Naive thymus-derived CD4-positive, alpha-beta T cell (primary cell): ENCODE measurements at regions of chr1 and their contacts with region 1.

Region 1: DNA sequence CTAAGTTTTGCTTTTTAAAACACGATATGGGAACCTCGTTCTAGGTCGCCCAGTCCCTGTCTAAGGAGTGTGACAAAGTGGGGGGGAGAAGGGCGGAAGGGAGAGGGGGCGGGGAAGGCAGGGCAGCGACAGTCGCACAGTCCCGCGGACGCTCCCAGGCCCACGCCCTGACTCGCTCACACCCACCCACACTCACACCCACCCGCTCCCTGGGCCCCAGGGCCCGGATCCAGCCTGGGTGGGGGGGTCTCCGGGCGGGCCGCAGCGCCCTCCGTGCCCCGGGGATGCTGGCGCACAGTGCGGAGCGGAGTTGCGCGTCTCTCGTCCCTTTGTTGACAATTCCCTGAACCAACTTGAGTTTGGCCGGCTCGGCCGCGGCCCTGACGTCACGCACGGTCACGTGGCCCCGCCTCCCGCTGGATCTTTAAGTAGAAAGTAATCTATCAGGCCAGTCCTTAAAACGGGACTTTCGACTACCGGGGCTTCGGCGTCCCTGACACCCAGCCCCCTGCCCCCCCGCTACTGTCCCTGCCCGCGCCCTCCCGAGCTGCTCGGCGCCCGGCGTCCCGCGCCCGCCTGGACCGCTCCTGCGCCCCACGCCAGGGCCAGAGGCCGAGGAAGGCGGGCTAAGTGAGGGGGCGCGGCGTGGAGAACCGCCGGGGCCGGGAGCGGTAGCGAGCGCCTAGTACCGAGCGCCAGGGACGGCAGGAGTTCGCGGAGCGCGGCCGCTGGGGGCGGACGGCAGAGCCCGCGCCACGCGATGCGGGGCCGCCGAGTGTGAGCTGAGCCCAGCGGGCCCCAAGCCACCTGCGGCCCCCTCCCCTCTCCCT is at the start of gene FOXD3:
- DNase-seq: peak in 5 of 9 donors; percentile 5 to 48 (median 26)
- ATAC-seq: peak; percentile 43
- H3K4me3 ChIP-seq: peak within 1 kb of the TSS; percentile 40
- H3K4me3 Mint-ChIP-seq: peak within 1 kb of the TSS; percentile 76 to 89 (median 84)
- H3K27ac ChIP-seq: no peak within 1 kb of the TSS
- H3K27ac Mint-ChIP-seq: peak within 1 kb of the TSS in 8 of 9 donors; percentile 67 to 88 (median 78)
- H3K4me1 ChIP-seq: peaks cover 2 to 13% of the 10 kb centered on the region in 2 donors
- H3K4me1 Mint-ChIP-seq: peaks cover 7 to 74% (median 50%) of the 10 kb centered on the region in 7 donors
- H3K27me3 ChIP-seq: peaks cover 42 to 77% of the 10 kb centered on the region in 2 donors
- H3K27me3 Mint-ChIP-seq: peaks cover 63 to 84% (median 78%) of the 10 kb centered on the region in 5 donors
- total RNA-seq, gene FOXD3: not detected

Region 2: DNA sequence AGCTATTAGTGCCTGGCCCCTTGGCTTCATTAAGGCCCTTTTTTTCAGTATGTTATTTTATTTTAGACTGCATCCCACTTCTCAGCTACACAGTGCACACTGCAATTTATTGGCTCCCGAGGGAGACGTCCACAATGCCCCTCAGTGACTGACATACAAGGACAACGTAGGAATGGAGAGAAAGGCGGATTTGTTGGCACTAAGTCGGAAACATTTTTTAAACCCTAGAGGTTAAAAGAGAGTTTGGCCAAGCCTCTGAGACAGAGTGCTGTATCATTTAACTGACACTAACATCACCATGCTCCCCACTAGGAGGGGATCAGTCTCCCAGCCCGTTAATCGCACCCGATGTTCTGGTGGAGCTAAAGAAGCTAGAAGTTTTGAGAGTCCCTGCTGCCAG is 45.7 kb before region 1 on chr1:
- CTCF ChIA-PET with region 1: no interaction called
- POLR2A ChIA-PET with region 1: no interaction called
- intact Hi-C with region 1: no loop called
- DNase-seq: no peak
- ATAC-seq: no peak
- H3K4me3 ChIP-seq: no peak overlapping the region
- H3K4me3 Mint-ChIP-seq: no peak overlapping the region
- H3K27ac ChIP-seq: no peak overlapping the region
- H3K27ac Mint-ChIP-seq: no peak overlapping the region
- H3K4me1 ChIP-seq: no peaks in the 10 kb centered on the region
- H3K4me1 Mint-ChIP-seq: no peaks in the 10 kb centered on the region
- H3K27me3 ChIP-seq: peaks cover 0 to 3% of the 10 kb centered on the region in 2 donors
- H3K27me3 Mint-ChIP-seq: peaks cover 3 to 19% (median 12%) of the 10 kb centered on the region in 5 donors

Region 3: GRCh38 chr1:63367215-63368103 is 45.1 kb after region 1 on chr1 and contains the start of gene ALG6:
- CTCF ChIA-PET with region 1: no interaction called
- POLR2A ChIA-PET with region 1: interaction called, 4 read pairs
- intact Hi-C with region 1: loop called in 1 of 2 experiments (anchors 2 kb)
- DNase-seq: peak; percentile 66 to 98 (median 84)
- ATAC-seq: peak; percentile 99
- H3K4me3 ChIP-seq: peak within 1 kb of the TSS; percentile 95
- H3K4me3 Mint-ChIP-seq: peak within 1 kb of the TSS; percentile 91 to 99 (median 94)
- H3K27ac ChIP-seq: peak within 1 kb of the TSS; percentile 72
- H3K27ac Mint-ChIP-seq: peak within 1 kb of the TSS; percentile 79 to 93 (median 84)
- H3K4me1 ChIP-seq: peaks cover 0 to 7% of the 10 kb centered on the region in 2 donors
- H3K4me1 Mint-ChIP-seq: peaks cover 23 to 46% (median 36%) of the 10 kb centered on the region in 7 donors
- H3K27me3 ChIP-seq: no peaks in the 10 kb centered on the region
- H3K27me3 Mint-ChIP-seq: peaks cover 0 to 7% (median 0%) of the 10 kb centered on the region in 5 donors
- total RNA-seq, gene ALG6: 16.1 to 29.8 (median 27.3) TPM